Heart left ventricle (tissue), 16 donors: ENCODE measurements at regions of chr4 and their contacts with region 1.

Region 1: GRCh38 chr4:15001869-15002658 is at the start of gene CPEB2:
- DNase-seq: peak; percentile 95 to 98 (median 96)
- ATAC-seq: peak; percentile 86 to 90 (median 87)
- H3K4me3 ChIP-seq: peak within 1 kb of the TSS; percentile 59 to 99 (median 92)
- H3K27ac ChIP-seq: peak within 1 kb of the TSS; percentile 98 to 100 (median 100)
- H3K4me1 ChIP-seq: peaks cover 0 to 27% (median 16%) of the 10 kb centered on the region in 12 donors
- H3K27me3 ChIP-seq: no peaks in the 10 kb centered on the region
- CTCF ChIP-seq: no peak
- POLR2A ChIP-seq: peak; percentile 89 to 100
- total RNA-seq, gene CPEB2: 11.5 to 26.1 (median 20.3) TPM

Region 2: GRCh38 chr4:14749910-14750309 is 252.2 kb before region 1 on chr4:
- intact Hi-C with region 1: loop called in 5 of 10 experiments (anchors 5 to 10 kb)
- DNase-seq: peak in 4 of 5 donors; percentile 36 to 54 (median 38)
- ATAC-seq: peak; percentile 61 to 94 (median 90)
- H3K4me3 ChIP-seq: no peak overlapping the region
- H3K27ac ChIP-seq: no peak overlapping the region
- H3K4me1 ChIP-seq: peaks cover 0 to 5% (median 0%) of the 10 kb centered on the region in 12 donors
- H3K27me3 ChIP-seq: no peaks in the 10 kb centered on the region
- CTCF ChIP-seq: peak; percentile 12 to 62 (median 50)
- POLR2A ChIP-seq: no peak

Region 3: GRCh38 chr4:14916554-14917297 is 85.3 kb before region 1 on chr4:
- intact Hi-C with region 1: loop called in 1 of 10 experiments (anchors 2 kb)
- DNase-seq: peak in 4 of 5 donors; percentile 24 to 51 (median 36)
- ATAC-seq: peak; percentile 87 to 95 (median 90)
- H3K4me3 ChIP-seq: no peak overlapping the region
- H3K27ac ChIP-seq: peak overlapping the region in 11 of 12 donors; percentile 50 to 88 (median 76)
- H3K4me1 ChIP-seq: peaks cover 0 to 12% (median 5%) of the 10 kb centered on the region in 12 donors
- H3K27me3 ChIP-seq: no peaks in the 10 kb centered on the region
- CTCF ChIP-seq: no peak
- POLR2A ChIP-seq: no peak

Region 4: GRCh38 chr4:15197005-15197404 is 194.9 kb after region 1 on chr4:
- intact Hi-C with region 1: loop called in 2 of 10 experiments (anchors 5 kb)
- DNase-seq: no peak
- ATAC-seq: peak in 3 of 4 donors; percentile 51 to 72 (median 66)
- H3K4me3 ChIP-seq: no peak overlapping the region
- H3K27ac ChIP-seq: no peak overlapping the region
- H3K4me1 ChIP-seq: peaks cover 0 to 22% (median 1%) of the 10 kb centered on the region in 12 donors
- H3K27me3 ChIP-seq: no peaks in the 10 kb centered on the region
- CTCF ChIP-seq: peak in 11 of 12 donors; percentile 9 to 50 (median 39)
- POLR2A ChIP-seq: no peak

Region 5: GRCh38 chr4:15457406-15458201 is 455.5 kb after region 1 on chr4:
- intact Hi-C with region 1: loop called in 2 of 10 experiments (anchors 5 to 10 kb)
- DNase-seq: no peak
- ATAC-seq: peak; percentile 24 to 79 (median 73)
- H3K4me3 ChIP-seq: no peak overlapping the region
- H3K27ac ChIP-seq: peak overlapping the region in 7 of 12 donors; percentile 8 to 43 (median 21)
- H3K4me1 ChIP-seq: peaks cover 0 to 24% (median 6%) of the 10 kb centered on the region in 12 donors
- H3K27me3 ChIP-seq: no peaks in the 10 kb centered on the region
- CTCF ChIP-seq: peak; percentile 64 to 86 (median 76)
- POLR2A ChIP-seq: no peak

Region 6: DNA sequence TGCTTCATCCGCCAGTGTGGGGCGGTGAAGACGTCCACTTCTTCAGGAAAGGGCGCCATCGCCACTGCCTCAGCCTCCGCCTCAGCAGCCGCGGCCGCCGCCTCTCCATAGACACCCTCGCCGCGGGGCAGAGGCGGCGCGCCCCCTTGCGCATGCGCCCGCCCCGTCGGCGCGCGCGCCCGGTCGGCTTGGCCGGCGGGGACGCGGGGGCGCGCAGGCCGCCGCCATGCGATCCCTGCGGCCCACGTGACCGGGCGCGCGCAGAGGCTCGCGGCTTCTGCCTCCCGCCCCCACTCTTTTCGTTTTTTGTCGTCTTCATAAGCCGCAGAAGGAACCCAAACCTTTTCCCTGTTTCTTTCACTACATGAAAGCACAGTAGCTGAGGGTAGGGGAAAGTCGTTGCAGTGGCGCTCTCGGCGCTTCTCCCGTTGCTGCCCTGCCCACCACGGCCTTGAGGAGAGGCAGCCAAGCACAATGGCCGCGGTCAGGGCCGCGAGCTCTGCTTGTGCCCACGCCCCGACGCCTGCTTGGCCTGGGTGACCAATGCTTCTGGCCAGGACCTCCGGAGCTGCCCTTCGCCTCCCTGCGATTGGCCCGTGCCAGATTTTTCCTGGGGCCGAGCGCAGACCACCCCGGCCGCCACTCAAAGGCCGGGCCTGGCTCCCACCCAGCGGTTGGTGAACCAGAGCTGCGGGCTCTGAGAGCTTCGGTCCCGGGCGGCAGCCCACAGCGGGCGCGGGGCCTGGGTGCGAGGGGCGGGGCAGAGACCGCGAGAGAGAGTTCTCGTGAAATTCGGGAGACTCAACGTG is 653.4 kb after region 1 on chr4 and contains the start of gene FBXL5:
- intact Hi-C with region 1: loop called in 1 of 10 experiments (anchors 10 kb)
- DNase-seq: peak; percentile 79 to 92 (median 84)
- ATAC-seq: peak; percentile 65 to 92 (median 87)
- H3K4me3 ChIP-seq: peak within 1 kb of the TSS; percentile 66 to 91 (median 76)
- H3K27ac ChIP-seq: peak within 1 kb of the TSS; percentile 96 to 100 (median 99)
- H3K4me1 ChIP-seq: peaks cover 6 to 77% (median 38%) of the 10 kb centered on the region in 12 donors
- H3K27me3 ChIP-seq: no peaks in the 10 kb centered on the region
- CTCF ChIP-seq: no peak
- POLR2A ChIP-seq: peak in 1 of 2 donors; percentile 59
- total RNA-seq, gene FBXL5: 71.1 to 112 (median 82.1) TPM